Activated T-helper 2 cell treated with anti-CD3 and anti-CD28 coated beads, Interferon-gamma antibody, Interleukin-2, Interleukin-4, amounts not matched to agents 10 μg/mL and 5 μg/mL and 100 μg/mL, durations not matched to agents 14 hours and 24 hours and 36 hours (primary cell): ENCODE measurements at regions of chr5 and their contacts with region 1.

Region 1: GRCh38 chr5:128083033-128083810 is at the start of gene SLC12A2:
- DNase-seq: peak; percentile 88
- H3K4me3 Mint-ChIP-seq: peak within 1 kb of the TSS; percentile 93
- H3K27ac Mint-ChIP-seq: peak within 1 kb of the TSS; percentile 95
- H3K4me1 Mint-ChIP-seq: peaks cover 57% of the 10 kb centered on the region
- H3K27me3 Mint-ChIP-seq: no peaks in the 10 kb centered on the region
- total RNA-seq, gene SLC12A2: 19.7 and 21.9 TPM in 2 replicates

Region 2: GRCh38 chr5:126449751-126450271 is 1633.4 kb before region 1 on chr5:
- intact Hi-C with region 1: loop called (anchors 10 kb)
- DNase-seq: peak; percentile 55
- H3K4me3 Mint-ChIP-seq: peak overlapping the region; percentile 82
- H3K27ac Mint-ChIP-seq: peak overlapping the region; percentile 99
- H3K4me1 Mint-ChIP-seq: peaks cover 67% of the 10 kb centered on the region
- H3K27me3 Mint-ChIP-seq: no peaks in the 10 kb centered on the region

Region 3: DNA sequence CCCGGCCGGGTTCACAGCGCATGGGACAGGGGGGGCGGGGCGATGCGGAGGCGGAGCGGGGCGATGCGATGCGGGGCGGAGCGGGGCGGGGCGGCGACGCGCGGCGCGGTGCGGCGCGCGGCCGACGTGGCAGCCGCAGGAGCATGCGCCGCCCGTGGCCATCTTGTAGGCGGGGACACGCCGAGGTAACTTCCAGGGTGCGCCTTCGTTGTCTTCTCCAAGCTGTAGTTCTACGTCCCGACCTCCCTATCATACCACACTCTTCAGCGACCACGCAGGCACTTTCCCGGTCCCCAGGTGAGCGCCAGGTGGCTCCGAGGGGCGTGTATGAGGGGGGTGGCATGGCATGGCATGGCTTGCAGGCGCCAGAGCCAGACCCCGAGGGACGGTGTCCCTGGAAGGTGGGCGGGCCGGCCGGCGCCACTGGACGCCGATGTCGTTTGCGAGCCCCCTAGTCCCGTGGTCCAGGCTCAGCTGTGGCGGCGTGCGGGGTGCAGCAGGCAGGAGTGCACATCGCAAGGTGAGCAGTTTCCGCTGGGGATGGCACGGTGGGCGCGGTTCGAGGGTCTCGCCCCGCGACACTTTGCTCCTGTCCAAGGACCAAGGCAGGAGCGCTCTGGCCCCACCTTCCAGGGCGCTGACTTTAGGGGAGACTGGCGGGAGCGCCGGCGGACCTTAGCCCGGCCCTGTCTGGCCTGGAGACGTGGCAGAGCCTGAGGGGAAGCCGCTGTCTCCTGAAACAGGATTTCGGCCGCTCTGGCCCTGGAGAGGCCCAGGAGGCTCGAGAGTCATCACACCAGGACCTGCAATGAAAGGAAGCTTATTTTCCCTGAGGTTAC is 565.5 kb before region 1 on chr5 and contains the start of gene PRRC1:
- intact Hi-C with region 1: loop called (anchors 10 kb)
- DNase-seq: peak; percentile 73
- H3K4me3 Mint-ChIP-seq: peak within 1 kb of the TSS; percentile 85
- H3K27ac Mint-ChIP-seq: peak within 1 kb of the TSS; percentile 75
- H3K4me1 Mint-ChIP-seq: peaks cover 23% of the 10 kb centered on the region
- H3K27me3 Mint-ChIP-seq: peaks cover 11% of the 10 kb centered on the region
- total RNA-seq, gene PRRC1: 53.5 and 56.9 TPM in 2 replicates

Region 4: DNA sequence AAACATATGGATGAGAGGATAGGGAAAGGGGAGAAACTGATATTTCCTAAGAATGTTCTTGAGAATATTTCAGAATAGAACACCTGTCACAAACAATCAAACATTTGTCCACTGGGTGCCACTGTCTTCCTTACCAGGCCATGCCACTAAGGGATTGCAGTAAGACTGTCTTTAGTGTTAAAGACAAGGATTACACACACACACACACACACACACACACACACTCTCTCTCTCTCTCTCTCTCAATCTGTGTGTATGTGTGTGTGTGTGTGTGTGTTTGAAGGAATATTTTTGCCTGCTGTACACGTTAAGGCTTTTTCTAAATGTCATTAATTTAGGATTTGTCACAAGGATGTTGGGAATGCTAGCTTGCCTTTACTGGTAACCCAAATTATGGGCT is 325.6 kb before region 1 on chr5:
- intact Hi-C with region 1: loop called (anchors 10 kb)
- DNase-seq: no peak
- H3K4me3 Mint-ChIP-seq: no peak overlapping the region
- H3K27ac Mint-ChIP-seq: no peak overlapping the region
- H3K4me1 Mint-ChIP-seq: no peaks in the 10 kb centered on the region
- H3K27me3 Mint-ChIP-seq: peaks cover 12% of the 10 kb centered on the region

Region 5: DNA sequence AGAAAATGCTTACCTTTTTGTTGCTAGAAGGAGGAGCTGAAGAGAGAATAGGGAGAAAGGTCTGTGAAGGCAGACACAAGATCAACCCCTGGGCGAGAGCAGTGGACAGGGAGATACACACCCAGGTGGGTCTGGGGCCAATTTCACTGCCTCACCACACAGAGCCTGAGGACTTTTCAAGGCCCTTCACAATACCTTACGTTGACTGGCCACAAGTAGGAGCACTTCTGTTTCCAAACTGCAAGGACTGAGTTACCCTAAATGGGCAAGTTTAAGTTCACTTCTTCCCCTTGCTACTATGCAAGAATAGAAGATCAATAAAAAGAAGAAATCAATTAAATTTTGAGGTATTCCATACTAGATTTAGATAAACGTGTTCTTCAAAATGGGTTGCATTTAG is 174.1 kb before region 1 on chr5:
- intact Hi-C with region 1: loop called (anchors 2 kb)
- DNase-seq: no peak
- H3K4me3 Mint-ChIP-seq: no peak overlapping the region
- H3K27ac Mint-ChIP-seq: no peak overlapping the region
- H3K4me1 Mint-ChIP-seq: peaks cover 3% of the 10 kb centered on the region
- H3K27me3 Mint-ChIP-seq: peaks cover 11% of the 10 kb centered on the region

Region 6: DNA sequence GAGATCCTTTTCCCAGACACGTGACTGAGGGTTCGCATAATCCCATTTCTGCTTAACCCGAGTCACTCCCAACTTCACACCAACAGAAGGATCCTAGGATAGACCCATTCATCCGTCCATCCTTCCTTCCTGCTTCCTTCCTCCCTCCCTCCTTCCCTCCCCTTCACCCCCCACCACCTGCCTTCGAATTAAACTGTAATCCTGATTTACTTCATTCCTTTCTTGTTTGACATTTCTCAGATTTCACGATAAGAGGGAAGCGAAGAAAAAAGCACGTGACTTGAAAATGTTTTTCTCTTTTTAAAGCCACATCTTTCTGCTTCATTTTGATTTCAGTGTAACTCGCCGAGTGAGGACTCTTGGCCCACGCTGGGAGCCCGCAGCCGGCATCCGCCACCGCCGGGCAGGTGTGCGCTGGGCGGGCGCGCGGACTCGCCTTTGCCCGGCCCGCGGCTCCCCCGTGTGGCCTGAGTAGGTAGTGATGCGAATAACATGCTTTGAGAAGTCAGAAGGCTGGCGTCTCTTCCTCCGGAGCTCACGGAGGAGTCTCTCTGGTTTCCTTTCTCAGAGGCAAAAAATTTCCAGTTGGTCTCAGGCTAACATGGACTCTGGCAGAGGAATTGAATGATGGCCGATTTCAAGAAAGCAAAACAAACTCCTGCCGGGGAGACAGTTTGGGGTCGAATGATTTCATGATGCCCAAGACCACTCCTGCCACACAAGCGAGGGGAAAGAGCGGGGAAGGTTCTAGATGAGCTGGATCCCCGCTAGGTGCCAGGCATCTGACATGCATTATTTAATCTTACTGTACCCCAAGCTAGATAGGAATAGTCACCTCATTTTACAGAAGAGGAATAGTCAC is 118.1 kb after region 1 on chr5:
- intact Hi-C with region 1: loop called (anchors 2 kb)
- DNase-seq: peak; percentile 71
- H3K4me3 Mint-ChIP-seq: peak overlapping the region; percentile 10
- H3K27ac Mint-ChIP-seq: no peak overlapping the region
- H3K4me1 Mint-ChIP-seq: peaks cover 24% of the 10 kb centered on the region
- H3K27me3 Mint-ChIP-seq: peaks cover 4% of the 10 kb centered on the region